ENCODE measurements at regions of chr15 and their contacts with region 1.

Region 1: DNA sequence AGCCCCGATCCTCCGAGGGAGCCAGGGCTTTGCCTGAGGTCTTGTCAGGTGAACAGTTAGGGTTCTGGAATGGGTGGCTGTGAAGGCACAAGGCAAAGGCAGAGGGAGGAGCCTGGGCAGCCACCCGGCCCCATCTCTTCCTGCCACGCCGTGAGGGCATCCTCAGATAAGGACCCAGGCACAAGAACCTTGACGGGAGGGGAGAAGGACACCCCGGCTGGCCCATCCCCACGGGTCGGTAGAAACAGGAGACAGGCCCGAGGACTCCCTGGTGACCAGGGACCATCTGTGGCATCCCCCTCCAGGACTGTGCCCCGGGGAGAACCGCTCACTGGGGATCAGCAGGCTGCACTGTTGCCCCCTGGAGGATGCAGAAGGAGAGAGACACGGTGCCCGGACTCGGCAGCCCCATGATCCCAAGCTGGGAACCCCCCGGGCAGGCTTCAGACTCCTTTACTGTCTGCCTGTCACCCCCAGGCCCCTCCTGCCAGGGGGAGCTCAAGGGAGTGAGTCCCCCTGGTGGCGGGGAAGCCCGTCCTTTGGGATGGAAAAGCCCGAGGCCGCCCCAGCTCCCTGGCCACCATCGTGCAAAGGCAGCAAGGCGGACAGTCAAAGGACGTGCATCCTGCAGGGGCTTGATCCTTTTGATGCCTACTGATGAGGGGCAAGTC is 12.3 kb upstream of the PCSK6 start:
- DNase-seq: peak; percentile 36 to 81
- H3K4me3 ChIP-seq: no peak overlapping the region
- H3K27ac ChIP-seq: no peak overlapping the region
- H3K4me1 ChIP-seq: peaks cover 0 to 10% (median 2%) of the 10 kb centered on the region in 4 experiments; a peak in 5 of 7 replicates
- H3K27me3 ChIP-seq: 0 out of 7 replicates have a peak, but pooled peaks cover 0 to 3% (median 0%) of the 10 kb centered on the region in 4 experiments
- CTCF ChIP-seq: peak; percentile 61 to 77 (median 70)
- EP300 ChIP-seq: no peak
- POLR2A ChIP-seq: no peak
- RAD21 ChIP-seq: peak; percentile 61 to 68

Region 2: GRCh38 chr15:101307048-101307896 is 194.6 kb before region 1 on chr15:
- CTCF ChIA-PET with region 1: interaction called, 11 read pairs
- POLR2A ChIA-PET with region 1: no interaction called
- DNase-seq: peak in 1 of 2 experiments; percentile 39
- H3K4me3 ChIP-seq: no peak overlapping the region
- H3K27ac ChIP-seq: no peak overlapping the region
- H3K4me1 ChIP-seq: no peaks in the 10 kb centered on the region
- H3K27me3 ChIP-seq: no peaks in the 10 kb centered on the region
- CTCF ChIP-seq: no peak
- EP300 ChIP-seq: no peak
- POLR2A ChIP-seq: no peak
- RAD21 ChIP-seq: no peak

Region 3: DNA sequence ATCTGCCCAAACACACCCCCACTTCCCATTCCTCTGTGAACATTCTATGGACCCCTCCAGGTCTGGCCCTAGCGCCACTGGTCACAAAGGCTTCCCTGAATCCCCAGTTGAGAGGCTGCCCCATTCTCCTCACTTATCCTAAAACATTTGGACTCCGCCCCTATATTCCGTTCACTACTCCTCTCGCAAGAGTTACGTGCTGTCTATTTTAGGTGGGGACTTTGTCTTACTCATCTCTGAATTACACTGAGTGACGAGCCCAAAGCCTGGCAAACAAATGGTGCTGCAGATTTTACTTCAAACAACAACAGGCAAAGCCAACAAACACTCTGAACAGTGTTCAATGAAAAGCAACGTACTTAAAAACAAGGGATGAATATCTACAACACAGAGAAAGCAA is 26.9 kb before region 1 on chr15:
- CTCF ChIA-PET with region 1: no interaction called
- POLR2A ChIA-PET with region 1: no interaction called
- DNase-seq: no peak
- H3K4me3 ChIP-seq: no peak overlapping the region
- H3K27ac ChIP-seq: no peak overlapping the region
- H3K4me1 ChIP-seq: no peaks in the 10 kb centered on the region
- H3K27me3 ChIP-seq: no peaks in the 10 kb centered on the region; a peak in 1 of 7 replicates
- CTCF ChIP-seq: no peak
- EP300 ChIP-seq: no peak
- POLR2A ChIP-seq: no peak
- RAD21 ChIP-seq: no peak

Region 4: GRCh38 chr15:101489633-101490407 is 12.0 kb before region 1 on chr15 and contains the start of gene PCSK6:
- CTCF ChIA-PET with region 1: interaction called, 19 read pairs
- POLR2A ChIA-PET with region 1: interaction called, 3 read pairs
- DNase-seq: peak in 1 of 2 experiments; percentile 68
- H3K4me3 ChIP-seq: peak within 1 kb of the TSS; percentile 27 to 61 (median 33); a peak in 7 of 8 replicates
- H3K27ac ChIP-seq: no peak within 1 kb of the TSS
- H3K4me1 ChIP-seq: peaks cover 0 to 6% (median 3%) of the 10 kb centered on the region in 4 experiments; a peak in 3 of 7 replicates
- H3K27me3 ChIP-seq: peaks cover 11 to 48% (median 35%) of the 10 kb centered on the region in 4 experiments
- CTCF ChIP-seq: no peak
- EP300 ChIP-seq: no peak
- POLR2A ChIP-seq: no peak
- RAD21 ChIP-seq: no peak
- total RNA-seq, gene PCSK6: 3.3 and 4.0 TPM in 2 replicates

Region 5: GRCh38 chr15:101514318-101514717 is 12.5 kb after region 1 on chr15:
- CTCF ChIA-PET with region 1: interaction called, 10 read pairs
- POLR2A ChIA-PET with region 1: no interaction called
- DNase-seq: peak in 1 of 2 experiments; percentile 24
- H3K4me3 ChIP-seq: no peak overlapping the region
- H3K27ac ChIP-seq: no peak overlapping the region
- H3K4me1 ChIP-seq: no peaks in the 10 kb centered on the region
- H3K27me3 ChIP-seq: no peaks in the 10 kb centered on the region
- CTCF ChIP-seq: no peak
- EP300 ChIP-seq: no peak
- POLR2A ChIP-seq: no peak
- RAD21 ChIP-seq: no peak

Region 6: DNA sequence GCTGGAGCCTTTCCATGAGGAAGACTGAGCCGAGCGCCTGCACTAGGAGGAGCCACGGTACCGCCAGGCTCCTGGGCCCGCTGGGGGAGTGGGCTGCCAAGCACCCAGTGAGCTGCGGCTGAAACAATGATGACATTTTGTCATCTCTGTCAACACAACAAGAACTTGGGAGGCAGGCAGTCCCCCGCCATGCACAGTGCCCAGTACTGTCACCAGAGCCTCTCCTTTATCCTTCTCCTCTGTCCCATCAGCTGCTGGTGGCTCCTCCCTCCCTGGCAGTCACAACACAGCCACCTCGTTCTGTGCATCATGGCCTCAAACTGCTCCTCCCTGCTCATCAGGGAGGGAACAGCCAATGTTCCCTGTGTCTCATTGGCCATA is 21.7 kb after region 1 on chr15:
- CTCF ChIA-PET with region 1: interaction called, 17 read pairs
- POLR2A ChIA-PET with region 1: no interaction called
- DNase-seq: peak in 1 of 2 experiments; percentile 34
- H3K4me3 ChIP-seq: no peak overlapping the region
- H3K27ac ChIP-seq: no peak overlapping the region
- H3K4me1 ChIP-seq: peaks cover 0 to 4% (median 0%) of the 10 kb centered on the region in 4 experiments; a peak in 1 of 7 replicates
- H3K27me3 ChIP-seq: no peaks in the 10 kb centered on the region
- CTCF ChIP-seq: no peak
- EP300 ChIP-seq: no peak
- POLR2A ChIP-seq: no peak
- RAD21 ChIP-seq: no peak

Measured in H1 (cell line).